AG04449 (cell line): ENCODE measurements at regions of chr18 and their contacts with region 1.

Region 1: DNA sequence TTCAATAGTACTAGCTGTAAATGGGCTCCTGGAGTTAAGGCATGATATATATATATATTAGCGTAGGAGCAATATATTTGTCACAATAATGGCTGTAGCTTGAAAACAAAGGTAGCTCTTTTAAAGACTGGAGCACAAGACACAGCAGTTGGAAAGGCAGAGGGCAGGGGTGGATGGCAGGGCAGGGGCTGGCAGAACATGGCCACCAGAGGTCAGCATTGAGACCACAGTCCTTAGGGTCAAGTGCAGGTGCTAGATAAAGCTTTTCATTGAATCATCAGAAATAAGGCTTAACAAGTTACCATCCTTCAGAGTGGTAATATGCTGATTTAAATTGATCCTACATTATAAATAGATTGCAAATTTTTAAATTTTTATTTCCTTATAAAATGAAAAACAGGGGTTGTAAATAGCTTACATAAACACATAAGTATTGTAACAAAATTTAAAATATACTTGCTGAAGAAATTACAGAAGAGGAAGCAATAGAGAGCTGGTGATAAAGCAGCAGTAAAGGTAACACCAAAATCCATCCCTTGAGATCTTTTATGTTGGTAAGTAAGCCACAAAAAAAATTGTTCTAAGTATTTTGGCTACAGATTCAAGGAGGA is 161.2 kb upstream of the PIEZO2 start:
- DNase-seq: no peak
- H3K4me3 ChIP-seq: no peak overlapping the region
- CTCF ChIP-seq: peak; percentile 81

Region 2: DNA sequence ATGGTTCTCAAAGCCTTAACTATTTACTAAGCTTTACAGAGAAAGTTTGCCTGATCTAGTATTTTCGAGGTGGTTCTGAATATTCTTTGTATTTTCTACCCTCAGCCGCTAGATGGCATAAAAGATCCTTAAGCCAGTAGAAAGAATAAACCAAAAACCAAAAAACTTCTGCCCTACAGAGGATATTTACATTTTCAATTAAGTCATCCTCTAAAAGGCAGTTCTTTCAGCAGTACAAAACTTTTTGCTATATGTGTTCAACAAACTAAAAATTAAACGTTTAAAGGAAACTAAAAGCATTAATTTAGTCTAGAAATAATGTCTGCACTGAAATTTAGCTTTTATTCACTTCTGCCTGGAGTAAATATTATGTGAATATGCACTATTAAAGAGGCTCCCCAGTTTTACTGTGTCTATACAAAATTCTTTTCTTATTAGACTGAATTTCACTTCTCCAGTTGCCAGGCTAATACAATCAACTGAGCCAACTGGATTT is 458.7 kb before region 1 on chr18:
- CTCF ChIA-PET with region 1: interaction called, 30 read pairs
- POLR2A ChIA-PET with region 1: no interaction called
- DNase-seq: peak; percentile 16
- H3K4me3 ChIP-seq: no peak overlapping the region
- CTCF ChIP-seq: peak; percentile 38

Region 3: DNA sequence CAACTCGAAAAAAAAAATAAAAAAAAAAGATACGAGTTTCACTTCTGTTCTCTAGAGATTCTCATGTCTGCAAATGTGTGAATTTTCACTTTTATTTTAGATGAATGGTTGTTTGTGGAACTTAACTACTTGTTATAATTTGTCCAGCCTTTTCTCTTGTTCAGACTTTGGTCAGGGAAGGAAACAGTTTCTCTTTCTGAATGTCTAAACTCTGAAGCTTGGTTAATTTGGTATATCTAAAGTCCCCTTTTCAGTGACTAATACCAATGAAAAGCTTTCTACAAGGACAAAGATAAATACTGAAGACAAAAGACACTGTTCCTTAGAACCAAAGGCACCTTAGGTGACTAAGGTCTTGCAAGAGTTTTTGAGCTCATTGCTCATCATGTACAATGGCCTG is 16.8 kb before region 1 on chr18:
- CTCF ChIA-PET with region 1: interaction called, 23 read pairs
- POLR2A ChIA-PET with region 1: interaction called, 4 read pairs
- DNase-seq: no peak
- H3K4me3 ChIP-seq: no peak overlapping the region
- CTCF ChIP-seq: no peak

Region 4: DNA sequence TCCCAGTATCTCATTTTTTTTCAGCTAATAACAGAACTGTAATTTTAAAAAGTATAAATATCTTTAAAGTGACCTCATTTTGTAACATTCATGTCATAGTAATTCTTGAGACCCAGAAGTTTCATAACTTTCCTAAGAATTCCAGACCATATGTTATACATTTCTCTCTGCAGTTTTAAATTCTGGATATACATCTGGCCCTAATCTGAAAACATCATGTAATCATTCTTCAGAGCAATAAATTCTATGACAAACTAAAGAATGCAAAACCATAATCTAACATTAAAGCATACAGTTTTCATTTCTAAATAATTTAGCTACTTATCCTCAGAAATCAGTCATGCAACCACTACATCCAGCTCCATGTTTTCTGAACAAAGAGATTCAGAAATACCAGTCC is 100.5 kb after region 1 on chr18:
- CTCF ChIA-PET with region 1: interaction called, 12 read pairs
- POLR2A ChIA-PET with region 1: no interaction called
- DNase-seq: peak; percentile 65
- H3K4me3 ChIP-seq: no peak overlapping the region
- CTCF ChIP-seq: no peak

Region 5: DNA sequence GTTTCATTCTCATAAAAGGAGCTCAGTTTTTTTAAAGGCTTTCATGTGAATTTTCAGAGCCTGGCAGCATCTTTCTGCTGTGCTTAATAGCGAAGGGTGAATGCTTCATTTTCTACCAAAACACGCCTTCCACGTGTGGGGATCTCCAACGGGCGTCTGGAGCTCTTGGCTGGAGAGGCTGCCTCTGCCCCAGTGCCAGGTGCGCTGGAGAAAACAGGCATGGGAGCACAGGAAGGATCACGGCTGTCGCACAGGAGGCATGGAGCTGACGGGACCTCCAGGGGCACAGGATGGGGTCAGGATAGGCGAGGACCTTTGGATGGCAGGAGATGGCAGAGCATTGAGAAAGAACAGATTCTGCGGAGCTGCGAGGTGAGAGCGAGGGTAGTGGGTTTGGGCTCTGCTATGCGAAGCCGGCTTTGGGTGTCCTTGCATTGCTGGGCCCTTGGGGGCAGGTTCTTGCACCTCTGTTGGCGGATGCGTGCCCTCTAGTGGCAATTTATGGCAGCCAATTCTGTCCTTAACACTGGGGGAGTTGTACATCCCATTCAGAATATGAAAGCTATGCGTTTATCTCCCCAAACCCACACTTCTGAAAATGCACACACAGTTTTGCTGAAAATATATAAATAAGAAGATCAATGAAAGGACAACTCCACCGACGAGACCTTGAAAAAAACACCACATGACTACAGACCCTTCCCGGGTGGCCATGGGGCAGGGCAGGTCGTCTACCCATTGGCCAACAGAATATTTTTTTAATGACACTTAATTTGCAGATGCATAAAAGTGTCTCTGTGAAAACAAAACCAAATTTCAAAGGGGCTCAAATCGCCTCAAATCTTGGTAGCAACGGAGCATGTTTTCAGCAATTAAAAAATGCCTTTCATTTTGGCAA is 208.5 kb after region 1 on chr18:
- CTCF ChIA-PET with region 1: interaction called, 35 read pairs
- POLR2A ChIA-PET with region 1: no interaction called
- DNase-seq: no peak
- H3K4me3 ChIP-seq: no peak overlapping the region
- CTCF ChIP-seq: peak; percentile 59

Region 6: GRCh38 chr18:11553098-11553940 is 242.7 kb after region 1 on chr18:
- CTCF ChIA-PET with region 1: interaction called, 172 read pairs
- POLR2A ChIA-PET with region 1: no interaction called
- DNase-seq: peak; percentile 5
- H3K4me3 ChIP-seq: no peak overlapping the region
- CTCF ChIP-seq: peak; percentile 81

Region 7: GRCh38 chr18:11570769-11571168 is 260.2 kb after region 1 on chr18:
- CTCF ChIA-PET with region 1: interaction called, 12 read pairs
- POLR2A ChIA-PET with region 1: no interaction called
- DNase-seq: no peak
- H3K4me3 ChIP-seq: no peak overlapping the region
- CTCF ChIP-seq: peak; percentile 5